Vagina (tissue), 2 donors: ENCODE measurements at regions of chr19 and their contacts with region 1.

Region 1: DNA sequence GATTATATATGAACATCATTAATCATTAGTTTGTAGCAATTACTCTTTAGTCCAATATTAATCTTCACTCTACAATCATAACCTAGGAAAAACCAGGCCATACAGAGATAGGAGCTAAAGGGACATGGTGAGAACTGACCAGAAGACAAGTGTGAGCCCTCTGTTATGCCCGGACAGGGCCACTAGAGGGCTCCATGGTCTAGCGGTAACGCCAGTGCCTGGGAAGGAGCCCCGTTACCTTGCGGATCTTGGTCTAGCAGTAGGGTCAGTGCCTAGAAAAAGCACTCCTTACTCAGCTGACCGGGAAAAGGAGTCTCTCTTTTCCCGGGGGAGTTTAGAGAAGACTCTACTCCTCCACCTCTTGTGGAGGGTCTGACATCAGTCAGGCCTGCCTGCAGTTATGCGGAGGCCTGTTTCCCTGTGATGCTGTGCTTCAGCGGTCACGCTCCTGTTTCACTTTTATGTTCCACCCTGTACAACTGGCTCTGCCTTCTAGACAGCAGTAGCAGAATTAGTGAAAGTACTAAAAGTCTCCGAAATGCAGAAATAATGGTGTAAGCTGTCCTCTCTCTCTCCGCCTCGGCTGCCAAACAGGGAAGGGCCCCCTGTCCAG is 13.8 kb downstream of the OR7D4 start:
- DNase-seq: no peak
- H3K4me3 ChIP-seq: peak overlapping the region; percentile 14 to 27
- H3K27ac ChIP-seq: no peak overlapping the region
- H3K4me1 ChIP-seq: no peaks in the 10 kb centered on the region
- H3K27me3 ChIP-seq: no peaks in the 10 kb centered on the region
- CTCF ChIP-seq: peak; percentile 68 to 90 (median 81)
- POLR2A ChIP-seq: no peak

Region 2: DNA sequence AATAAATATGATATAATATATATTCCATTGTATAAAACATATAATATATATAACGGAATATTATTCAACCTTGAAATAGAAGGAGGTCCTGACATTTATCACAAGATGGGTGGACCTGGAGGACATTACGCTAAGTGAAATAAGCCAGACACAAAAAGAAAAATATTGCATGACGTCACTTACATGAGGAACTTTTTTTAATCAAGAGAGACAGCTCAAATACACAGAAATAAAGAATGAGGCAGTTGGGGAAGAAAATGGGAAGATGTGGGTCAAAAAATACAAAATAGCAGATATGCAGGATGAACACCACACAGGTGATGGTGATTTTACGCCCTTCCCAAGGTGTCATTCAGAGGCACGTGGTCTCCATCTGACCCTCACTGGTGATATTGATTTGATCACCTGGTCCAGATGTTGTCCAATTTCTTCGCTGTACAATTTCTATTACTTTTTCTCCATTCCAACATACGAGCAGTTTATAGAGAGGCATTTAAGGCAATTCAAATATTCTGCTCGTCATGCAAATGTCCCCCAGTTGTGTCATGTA is 65.9 kb before region 1 on chr19:
- intact Hi-C with region 1: no loop called
- DNase-seq: no peak
- H3K4me3 ChIP-seq: peak overlapping the region; percentile 65 to 81
- H3K27ac ChIP-seq: peak overlapping the region; percentile 72
- H3K4me1 ChIP-seq: peaks cover 18% of the 10 kb centered on the region
- H3K27me3 ChIP-seq: no peaks in the 10 kb centered on the region
- CTCF ChIP-seq: no peak
- POLR2A ChIP-seq: no peak

Region 3: DNA sequence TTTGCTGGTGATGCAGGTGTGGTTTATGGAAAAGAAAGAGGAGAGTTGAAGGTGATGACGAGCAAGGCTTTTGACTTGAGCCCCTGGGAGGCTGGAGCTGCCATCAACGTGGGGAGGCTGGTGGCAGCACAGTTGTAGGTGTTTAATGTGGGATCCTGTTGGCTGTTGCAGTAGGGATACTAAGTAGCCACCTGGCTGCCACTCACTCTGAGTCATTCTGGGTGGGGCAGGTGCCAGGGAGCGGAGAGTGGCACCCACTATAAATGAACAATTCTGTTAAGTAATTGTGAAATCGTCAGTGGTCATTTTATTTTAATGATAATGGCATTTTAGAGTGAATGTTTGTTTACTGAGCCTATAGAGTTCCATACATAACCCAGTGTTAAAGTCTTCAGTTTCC is 55.6 kb before region 1 on chr19:
- intact Hi-C with region 1: no loop called
- DNase-seq: no peak
- H3K4me3 ChIP-seq: no peak overlapping the region
- H3K27ac ChIP-seq: no peak overlapping the region
- H3K4me1 ChIP-seq: peaks cover 9% of the 10 kb centered on the region
- H3K27me3 ChIP-seq: no peaks in the 10 kb centered on the region
- CTCF ChIP-seq: no peak
- POLR2A ChIP-seq: no peak

Region 4: DNA sequence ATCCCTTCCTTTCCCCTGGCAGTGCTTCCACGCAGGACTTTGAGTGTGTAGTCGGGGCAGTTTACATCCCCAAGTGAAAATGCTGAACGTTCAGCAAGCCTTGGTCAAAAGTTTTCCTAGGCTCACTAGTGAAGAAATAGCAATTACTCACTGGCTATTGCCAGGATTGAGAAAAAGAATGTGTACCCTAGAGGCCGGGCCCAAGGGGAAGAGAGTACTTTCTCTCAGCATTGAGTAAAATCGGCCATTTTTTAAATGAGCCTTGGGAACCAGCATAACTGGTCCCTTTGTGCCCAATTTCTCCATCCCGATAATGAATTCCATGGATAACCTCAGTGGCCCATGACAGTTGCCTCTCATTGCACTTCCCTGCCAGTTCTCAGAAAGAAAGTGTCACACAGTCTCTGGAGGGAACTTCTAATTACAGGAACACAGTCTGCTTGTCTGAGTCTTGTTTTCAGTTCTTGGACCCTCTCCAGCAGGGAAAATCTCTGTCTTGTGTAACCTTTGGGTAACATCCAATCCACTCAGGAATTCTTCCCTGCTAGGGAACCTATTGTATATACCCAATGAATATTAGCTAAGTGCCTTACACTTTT is 34.1 kb before region 1 on chr19:
- intact Hi-C with region 1: no loop called
- DNase-seq: no peak
- H3K4me3 ChIP-seq: no peak overlapping the region
- H3K27ac ChIP-seq: no peak overlapping the region
- H3K4me1 ChIP-seq: no peaks in the 10 kb centered on the region
- H3K27me3 ChIP-seq: no peaks in the 10 kb centered on the region
- CTCF ChIP-seq: no peak
- POLR2A ChIP-seq: no peak

Region 5: GRCh38 chr19:9808855-9809824 is 603.5 kb after region 1 on chr19:
- intact Hi-C with region 1: loop called (anchors 10 kb)
- DNase-seq: no peak
- H3K4me3 ChIP-seq: no peak overlapping the region
- H3K27ac ChIP-seq: no peak overlapping the region
- H3K4me1 ChIP-seq: no peaks in the 10 kb centered on the region
- H3K27me3 ChIP-seq: no peaks in the 10 kb centered on the region
- CTCF ChIP-seq: no peak
- POLR2A ChIP-seq: no peak